Tibial artery (tissue), 4 donors: ENCODE measurements at regions of chr2 and their contacts with region 1.

Region 1: GRCh38 chr2:47002480-47003381 is 87.1 kb upstream of the MCFD2 start:
- DNase-seq: peak in 1 of 2 donors; percentile 51
- H3K4me3 ChIP-seq: no peak overlapping the region
- H3K27ac ChIP-seq: peak overlapping the region; percentile 78 to 92
- H3K4me1 ChIP-seq: peaks cover 0 to 73% (median 57%) of the 10 kb centered on the region in 4 donors
- H3K27me3 ChIP-seq: no peaks in the 10 kb centered on the region
- CTCF ChIP-seq: no peak

Region 2: DNA sequence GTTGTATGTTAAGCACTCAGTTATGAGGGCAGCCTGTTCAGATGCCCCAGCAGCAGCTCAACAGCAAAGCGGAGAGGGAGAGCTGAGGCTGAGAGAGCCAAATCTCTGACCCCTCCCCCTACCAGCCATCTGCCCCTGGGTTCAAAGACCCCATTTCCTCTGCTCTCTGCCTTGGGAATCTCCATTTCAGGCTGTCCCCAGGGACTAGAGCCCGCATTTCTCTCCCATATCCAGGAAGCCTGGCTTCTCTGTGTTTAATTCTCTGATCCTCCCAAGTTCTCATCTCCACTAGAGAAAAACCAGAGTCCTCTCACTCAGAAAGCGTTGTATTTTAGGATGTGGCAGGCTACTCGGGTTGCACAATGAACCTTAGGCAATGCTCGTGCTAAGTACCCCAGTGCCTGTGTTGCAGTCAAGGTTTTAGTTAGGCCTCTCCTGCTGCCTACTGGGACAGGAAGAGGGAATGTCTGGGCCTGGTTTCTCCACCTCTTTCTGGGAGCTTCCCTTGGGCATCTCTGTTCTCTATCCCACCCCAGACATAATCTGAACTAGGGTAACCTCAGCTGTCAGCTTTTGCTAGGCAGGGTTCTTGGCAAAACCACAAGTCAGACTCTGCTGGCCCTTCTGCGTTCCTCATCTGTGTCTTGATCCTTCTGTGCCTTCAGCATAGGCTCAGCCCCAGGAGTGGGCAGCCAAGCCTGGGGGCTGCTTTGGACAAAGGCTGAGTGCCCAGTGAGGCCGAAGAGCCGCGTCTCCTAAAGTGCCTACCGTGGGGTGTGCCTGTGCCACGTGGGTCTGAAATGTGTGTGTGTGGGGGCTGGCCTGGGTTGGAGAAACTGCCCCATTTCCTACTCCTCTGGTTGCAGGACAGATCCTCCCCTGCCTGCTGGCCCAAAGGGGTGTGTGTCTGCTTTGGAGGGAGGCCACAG is 55.5 kb after region 1 on chr2:
- intact Hi-C with region 1: loop called (anchors 10 kb)
- DNase-seq: peak; percentile 87 to 89
- H3K4me3 ChIP-seq: no peak overlapping the region
- H3K27ac ChIP-seq: peak overlapping the region; percentile 81 to 91
- H3K4me1 ChIP-seq: peaks cover 23 to 77% (median 65%) of the 10 kb centered on the region in 4 donors
- H3K27me3 ChIP-seq: no peaks in the 10 kb centered on the region
- CTCF ChIP-seq: no peak

Region 3: GRCh38 chr2:47888581-47889280 is 886.0 kb after region 1 on chr2:
- intact Hi-C with region 1: no loop called
- DNase-seq: no peak
- H3K4me3 ChIP-seq: no peak overlapping the region
- H3K27ac ChIP-seq: no peak overlapping the region
- H3K4me1 ChIP-seq: peaks cover 0 to 68% (median 22%) of the 10 kb centered on the region in 4 donors
- H3K27me3 ChIP-seq: no peaks in the 10 kb centered on the region
- CTCF ChIP-seq: no peak